ENCODE measurements at regions of chr11 and their contacts with region 1.

Region 1: GRCh38 chr11:110376711-110377324 is 52.9 kb upstream of the FDX1 start:
- DNase-seq: peak; percentile 36
- ATAC-seq: peak; percentile 50
- H3K4me3 ChIP-seq: no peak overlapping the region
- H3K27ac ChIP-seq: no peak overlapping the region
- H3K4me1 ChIP-seq: peaks cover 27% of the 10 kb centered on the region
- H3K27me3 ChIP-seq: no peaks in the 10 kb centered on the region
- CTCF ChIP-seq: peak; percentile 60 to 83 (median 80)
- EP300 ChIP-seq: no peak
- POLR2A ChIP-seq: no peak
- RAD21 ChIP-seq: peak; percentile 83

Region 2: DNA sequence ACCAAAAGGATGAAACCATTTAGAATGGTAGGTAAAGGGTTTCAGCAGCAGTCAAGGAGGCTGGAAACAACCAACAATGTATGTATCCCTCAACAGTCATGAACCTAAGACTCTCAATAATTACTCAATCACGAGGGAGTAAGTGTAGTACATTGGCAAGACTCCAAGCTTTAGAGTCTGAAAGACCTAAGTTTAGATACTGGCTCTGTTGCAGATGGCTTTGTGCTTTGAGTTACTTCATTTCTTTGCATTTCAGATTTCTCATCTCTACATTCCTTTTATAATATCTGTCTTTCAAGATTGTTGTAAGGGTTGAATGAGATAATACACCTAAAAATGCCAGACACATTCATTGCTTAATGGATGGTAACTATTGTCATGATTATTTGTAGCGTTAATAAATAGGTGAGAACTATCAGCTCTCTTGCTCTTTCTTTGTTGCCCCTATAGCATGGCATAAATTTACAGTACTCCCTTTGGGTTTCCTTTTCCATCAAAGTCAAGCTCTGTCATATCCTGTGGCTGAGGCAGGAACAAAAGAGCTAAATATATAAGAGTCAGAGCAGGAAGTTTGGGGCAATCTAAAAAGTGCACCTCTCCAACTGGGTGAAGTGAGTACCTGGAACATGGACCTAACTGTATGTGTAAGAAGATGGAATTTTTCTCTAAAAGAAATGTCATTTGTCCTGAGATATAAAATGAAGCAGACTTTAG is 511.8 kb before region 1 on chr11:
- CTCF ChIA-PET with region 1: no interaction called
- POLR2A ChIA-PET with region 1: no interaction called
- RAD21 ChIA-PET with region 1: no interaction called
- SMC1A ChIA-PET with region 1: interaction called, 4 read pairs
- in situ Hi-C with region 1: loop called (anchors 5 kb)
- intact Hi-C with region 1: no loop called
- DNase-seq: no peak
- ATAC-seq: peak; percentile 54
- H3K4me3 ChIP-seq: no peak overlapping the region
- H3K27ac ChIP-seq: no peak overlapping the region; the same call in 1 of the 2 replicates
- H3K4me1 ChIP-seq: peaks cover 19% of the 10 kb centered on the region
- H3K27me3 ChIP-seq: no peaks in the 10 kb centered on the region
- CTCF ChIP-seq: no peak
- EP300 ChIP-seq: no peak
- POLR2A ChIP-seq: no peak
- RAD21 ChIP-seq: no peak

Region 3: GRCh38 chr11:109960831-109961230 is 416.0 kb before region 1 on chr11:
- CTCF ChIA-PET with region 1: no interaction called
- POLR2A ChIA-PET with region 1: no interaction called
- RAD21 ChIA-PET with region 1: no interaction called
- SMC1A ChIA-PET with region 1: no interaction called
- in situ Hi-C with region 1: loop called (anchors 5 kb)
- intact Hi-C with region 1: no loop called
- DNase-seq: no peak
- ATAC-seq: no peak
- H3K4me3 ChIP-seq: no peak overlapping the region
- H3K27ac ChIP-seq: no peak overlapping the region
- H3K4me1 ChIP-seq: peaks cover 15% of the 10 kb centered on the region
- H3K27me3 ChIP-seq: no peaks in the 10 kb centered on the region
- CTCF ChIP-seq: no peak
- EP300 ChIP-seq: no peak
- POLR2A ChIP-seq: no peak
- RAD21 ChIP-seq: no peak

Region 4: GRCh38 chr11:110046775-110047380 is 329.9 kb before region 1 on chr11:
- CTCF ChIA-PET with region 1: no interaction called
- POLR2A ChIA-PET with region 1: no interaction called
- RAD21 ChIA-PET with region 1: no interaction called
- SMC1A ChIA-PET with region 1: no interaction called
- in situ Hi-C with region 1: no loop called
- intact Hi-C with region 1: no loop called
- DNase-seq: no peak
- ATAC-seq: no peak
- H3K4me3 ChIP-seq: no peak overlapping the region
- H3K27ac ChIP-seq: no peak overlapping the region
- H3K4me1 ChIP-seq: no peaks in the 10 kb centered on the region
- H3K27me3 ChIP-seq: no peaks in the 10 kb centered on the region
- CTCF ChIP-seq: no peak
- EP300 ChIP-seq: no peak
- POLR2A ChIP-seq: no peak
- RAD21 ChIP-seq: no peak

Region 5: GRCh38 chr11:110207123-110207522 is 169.7 kb before region 1 on chr11:
- CTCF ChIA-PET with region 1: interaction called, 81 read pairs
- POLR2A ChIA-PET with region 1: interaction called, 3 read pairs
- RAD21 ChIA-PET with region 1: interaction called, 42 read pairs
- SMC1A ChIA-PET with region 1: interaction called, 90 read pairs
- in situ Hi-C with region 1: loop called (anchors 5 kb)
- intact Hi-C with region 1: no loop called
- DNase-seq: no peak
- ATAC-seq: no peak
- H3K4me3 ChIP-seq: no peak overlapping the region
- H3K27ac ChIP-seq: no peak overlapping the region
- H3K4me1 ChIP-seq: no peaks in the 10 kb centered on the region
- H3K27me3 ChIP-seq: no peaks in the 10 kb centered on the region
- CTCF ChIP-seq: no peak
- EP300 ChIP-seq: no peak
- POLR2A ChIP-seq: no peak
- RAD21 ChIP-seq: no peak

Region 6: GRCh38 chr11:110296226-110297075 is 80.4 kb before region 1 on chr11 and contains the start of gene RDX:
- CTCF ChIA-PET with region 1: interaction called, 4 read pairs
- POLR2A ChIA-PET with region 1: no interaction called
- RAD21 ChIA-PET with region 1: interaction called, 3 read pairs
- SMC1A ChIA-PET with region 1: interaction called, 5 read pairs
- in situ Hi-C with region 1: no loop called
- intact Hi-C with region 1: loop called (anchors 2 kb)
- DNase-seq: no peak
- ATAC-seq: peak; percentile 73
- H3K4me3 ChIP-seq: peak within 1 kb of the TSS; percentile 98
- H3K27ac ChIP-seq: peak within 1 kb of the TSS; percentile 94
- H3K4me1 ChIP-seq: no peaks in the 10 kb centered on the region
- H3K27me3 ChIP-seq: no peaks in the 10 kb centered on the region
- CTCF ChIP-seq: peak in 1 of 3 experiments; percentile 20; a peak in 1 of 6 replicates
- EP300 ChIP-seq: no peak
- POLR2A ChIP-seq: peak; percentile 82
- RAD21 ChIP-seq: peak; percentile 38; the same call in 1 of the 2 replicates
- polyA plus RNA-seq, gene RDX: 37.4 to 40.3 TPM

Region 7: DNA sequence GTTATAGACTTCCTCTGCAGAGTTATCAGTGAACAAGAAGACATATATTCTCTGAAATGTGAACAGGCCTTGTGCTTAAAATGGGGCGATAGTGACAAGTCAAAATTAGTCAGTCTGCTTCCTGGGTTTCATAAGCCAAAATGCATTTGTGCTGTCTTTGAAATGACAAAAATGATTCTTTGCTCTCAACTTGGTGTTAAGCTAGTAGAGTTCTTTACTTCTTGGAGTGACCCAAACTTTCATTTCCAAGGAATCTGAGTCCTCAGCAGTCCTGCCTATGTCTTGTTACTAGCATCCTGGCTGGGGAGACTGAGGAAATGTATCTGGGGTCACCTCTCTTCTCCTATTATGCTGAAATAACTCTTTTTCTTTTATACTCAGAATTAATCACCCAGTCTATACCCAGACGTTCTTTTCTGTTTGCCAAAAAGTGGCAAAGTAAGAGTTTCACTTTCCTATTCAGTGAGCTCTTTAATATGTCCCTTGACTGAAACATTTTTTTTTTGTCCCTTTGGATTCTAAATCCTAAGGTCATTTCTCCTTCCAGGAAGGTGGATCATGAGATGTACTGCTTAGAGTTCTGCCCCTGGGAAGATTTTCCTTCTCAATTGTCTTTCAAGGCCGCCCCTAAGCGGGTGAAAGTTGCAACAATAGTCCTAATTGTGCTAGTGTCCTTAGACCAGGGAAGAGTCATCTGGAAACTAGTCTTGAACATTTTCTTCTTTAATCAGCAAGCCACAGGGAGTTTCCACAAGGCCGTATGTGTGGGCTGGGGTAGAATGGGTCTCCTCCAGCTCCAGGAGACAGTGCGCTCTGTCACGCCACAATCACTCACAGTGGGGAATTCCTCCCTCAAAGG is 27.5 kb before region 1 on chr11:
- CTCF ChIA-PET with region 1: interaction called, 5 read pairs
- POLR2A ChIA-PET with region 1: interaction called, 8 read pairs
- RAD21 ChIA-PET with region 1: interaction called, 14 read pairs
- SMC1A ChIA-PET with region 1: interaction called, 12 read pairs
- in situ Hi-C with region 1: no loop called
- intact Hi-C with region 1: no loop called
- DNase-seq: peak; percentile 94
- ATAC-seq: peak; percentile 86
- H3K4me3 ChIP-seq: peak overlapping the region; percentile 38; the same call in 1 of the 2 replicates
- H3K27ac ChIP-seq: peak overlapping the region; percentile 96
- H3K4me1 ChIP-seq: peaks cover 43% of the 10 kb centered on the region
- H3K27me3 ChIP-seq: no peaks in the 10 kb centered on the region
- CTCF ChIP-seq: peak in 1 of 3 experiments; percentile 33; a peak in 2 of 6 replicates
- EP300 ChIP-seq: peak; percentile 94 to 99
- POLR2A ChIP-seq: peak; percentile 30; the same call in 1 of the 2 replicates
- RAD21 ChIP-seq: peak; percentile 51

Region 8: GRCh38 chr11:110434952-110435779 is 58.3 kb after region 1 on chr11:
- CTCF ChIA-PET with region 1: interaction called, 20 read pairs
- POLR2A ChIA-PET with region 1: interaction called, 3 read pairs
- RAD21 ChIA-PET with region 1: interaction called, 14 read pairs
- SMC1A ChIA-PET with region 1: interaction called, 12 read pairs
- in situ Hi-C with region 1: no loop called
- intact Hi-C with region 1: no loop called
- DNase-seq: no peak
- ATAC-seq: peak; percentile 43
- H3K4me3 ChIP-seq: no peak overlapping the region
- H3K27ac ChIP-seq: no peak overlapping the region
- H3K4me1 ChIP-seq: peaks cover 15% of the 10 kb centered on the region
- H3K27me3 ChIP-seq: no peaks in the 10 kb centered on the region
- CTCF ChIP-seq: peak; percentile 38 to 44 (median 43); a peak in 5 of 6 replicates
- EP300 ChIP-seq: no peak
- POLR2A ChIP-seq: no peak
- RAD21 ChIP-seq: no peak

Region 9: DNA sequence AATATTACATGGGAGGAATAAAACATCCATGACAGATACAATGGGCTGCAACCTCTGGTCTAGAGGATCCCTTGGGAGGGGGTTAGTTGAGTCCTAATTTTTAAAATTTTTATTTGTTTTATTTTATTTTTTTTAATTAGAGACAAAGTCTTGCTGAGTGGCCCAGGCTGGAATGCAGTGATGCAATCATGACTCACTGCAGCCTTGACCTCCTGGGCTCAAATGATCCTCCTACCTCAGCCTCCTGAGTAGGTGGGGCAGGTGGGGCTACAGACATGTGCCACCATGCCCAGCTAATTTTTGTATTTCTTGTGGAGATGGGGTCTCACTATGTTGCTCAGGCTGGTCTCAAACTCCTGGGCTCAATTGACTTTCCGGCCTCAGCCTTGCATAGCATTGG is 96.0 kb after region 1 on chr11:
- CTCF ChIA-PET with region 1: no interaction called
- POLR2A ChIA-PET with region 1: no interaction called
- RAD21 ChIA-PET with region 1: no interaction called
- SMC1A ChIA-PET with region 1: no interaction called
- in situ Hi-C with region 1: no loop called
- intact Hi-C with region 1: no loop called
- DNase-seq: no peak
- ATAC-seq: no peak
- H3K4me3 ChIP-seq: no peak overlapping the region
- H3K27ac ChIP-seq: no peak overlapping the region
- H3K4me1 ChIP-seq: no peaks in the 10 kb centered on the region
- H3K27me3 ChIP-seq: no peaks in the 10 kb centered on the region
- CTCF ChIP-seq: no peak
- EP300 ChIP-seq: no peak
- POLR2A ChIP-seq: no peak
- RAD21 ChIP-seq: no peak